ENCODE measurements at regions of chr11 and their contacts with region 1.

Region 1: DNA sequence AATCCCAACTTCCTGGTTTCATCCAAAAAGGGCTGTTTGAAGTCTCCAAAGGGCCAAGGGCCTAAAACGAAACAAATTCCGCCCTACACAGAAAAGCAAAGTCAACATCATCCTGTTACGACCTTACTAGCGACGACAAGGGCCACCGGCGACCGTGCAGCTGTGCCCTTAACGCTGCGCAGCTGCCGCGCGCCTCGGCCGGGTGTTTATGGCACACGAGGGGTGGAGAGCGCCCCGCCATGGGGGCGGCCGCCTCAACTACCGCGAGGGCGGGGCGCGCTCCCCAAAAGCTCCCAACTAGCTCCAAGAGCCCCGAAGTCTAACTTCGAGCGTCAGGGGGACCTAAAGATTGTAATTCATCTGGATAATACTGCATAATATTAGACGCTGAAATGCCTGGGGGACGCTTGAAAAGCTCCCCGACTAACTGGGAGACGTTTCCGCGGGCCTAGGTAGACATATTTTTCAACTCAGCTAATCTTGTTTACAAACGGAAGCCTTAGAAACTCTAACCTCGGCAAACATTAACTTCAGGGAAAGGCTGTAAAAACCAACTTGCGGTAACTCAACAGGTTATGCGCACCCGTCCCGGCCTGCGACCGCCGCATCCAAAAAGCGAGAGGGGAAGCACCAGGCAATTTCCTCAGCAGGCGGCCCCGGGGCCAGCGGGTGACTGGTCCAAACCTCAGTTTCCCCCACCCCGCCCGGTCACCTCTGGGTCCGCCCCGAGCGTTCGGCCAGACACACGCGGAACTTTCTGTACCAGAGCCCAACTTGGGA is 694 bp downstream of the TMEM123 start:
- DNase-seq: peak; percentile 84

Region 2: GRCh38 chr11:102346748-102347461 is 105.0 kb before region 1 on chr11 and contains the start of gene BIRC2:
- intact Hi-C with region 1: loop called (anchors 2 kb)
- DNase-seq: peak; percentile 98
- total RNA-seq, gene BIRC2: 31.5 TPM

Region 3: GRCh38 chr11:102390667-102391465 is 61.0 kb before region 1 on chr11:
- intact Hi-C with region 1: loop called (anchors 10 kb)
- DNase-seq: peak; percentile 82

Measured in cardiac septum (tissue), 1 donor.